Activated naive CD4-positive, alpha-beta T cell treated with anti-CD3 and anti-CD28 coated beads for 36 hours (primary cell): ENCODE measurements at regions of chr13 and their contacts with region 1.

Region 1: DNA sequence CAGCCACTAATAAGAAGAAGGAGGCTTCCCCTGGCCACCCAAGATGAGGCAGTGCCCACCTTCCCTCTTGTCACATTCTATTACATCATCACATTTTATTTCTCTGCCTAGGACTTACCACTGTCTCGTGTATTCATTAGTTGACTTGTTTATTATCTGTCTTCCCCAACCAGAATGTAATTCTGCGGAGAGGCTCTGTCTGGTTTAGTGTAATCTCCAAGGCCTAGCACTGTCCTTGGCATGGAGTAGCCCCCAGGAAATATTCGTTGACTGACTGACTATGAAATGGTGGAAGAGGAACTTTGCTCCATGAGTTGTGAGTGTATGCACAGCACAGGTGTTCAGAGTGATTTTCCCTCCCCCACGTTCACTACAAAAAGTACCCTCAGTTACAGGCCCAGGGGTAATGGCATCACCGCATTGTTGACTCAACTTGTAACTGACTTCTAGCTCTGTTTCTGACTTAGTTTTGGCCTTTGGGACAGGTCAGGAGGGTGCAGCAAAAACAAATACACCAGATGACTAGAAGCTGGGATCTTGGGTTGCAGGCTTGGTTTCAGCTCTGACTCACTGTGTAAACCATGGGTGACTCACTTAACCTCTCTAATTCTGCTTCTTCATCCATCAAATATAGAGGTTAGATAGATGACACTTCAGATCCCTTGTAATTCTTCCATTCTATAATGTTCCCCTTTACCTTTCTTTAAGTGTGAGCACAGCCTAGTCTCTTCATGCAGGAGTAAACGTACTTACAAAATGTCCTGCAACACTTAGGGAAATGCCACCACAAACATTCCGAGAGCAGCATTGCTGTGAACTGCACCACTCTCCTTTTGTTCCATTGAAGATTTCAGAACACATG is 229.7 kb downstream of the KCNRG start:
- DNase-seq: peak; percentile 84
- H3K4me3 Mint-ChIP-seq: no peak overlapping the region
- H3K27ac Mint-ChIP-seq: peak overlapping the region; percentile 72
- H3K4me1 Mint-ChIP-seq: peaks cover 30% of the 10 kb centered on the region
- H3K27me3 Mint-ChIP-seq: peaks cover 13% of the 10 kb centered on the region

Region 2: DNA sequence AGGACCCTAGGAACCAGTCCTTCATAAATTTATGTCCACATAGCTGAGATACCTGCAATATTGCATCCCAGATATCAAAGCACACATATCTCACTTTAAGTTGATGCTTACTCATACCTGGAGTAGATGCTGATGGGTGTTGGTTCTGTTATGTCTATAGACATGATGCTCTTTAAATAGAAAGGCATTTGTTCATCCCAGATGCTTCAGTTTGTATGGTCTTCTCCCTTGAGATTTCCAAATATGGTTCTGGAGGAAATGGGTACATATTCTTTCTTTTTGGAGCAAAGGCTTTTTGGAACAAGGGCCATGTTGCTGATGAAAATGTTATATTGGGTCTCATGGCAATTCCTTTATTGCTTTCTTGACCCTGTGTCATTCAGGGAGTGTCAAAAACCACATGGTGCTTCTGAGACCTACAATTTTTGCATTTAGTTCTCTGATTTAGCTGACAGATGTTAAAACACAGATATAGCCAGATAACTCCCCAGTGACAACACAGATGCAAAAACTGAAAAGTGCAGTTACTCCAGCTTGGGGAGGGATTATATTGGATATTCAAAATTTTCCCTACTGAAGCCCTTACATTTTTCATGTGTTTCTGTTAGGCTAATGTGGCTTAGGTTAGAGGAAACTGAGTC is 18.3 kb before region 1 on chr13:
- CTCF ChIA-PET with region 1: no interaction called
- intact Hi-C with region 1: loop called (anchors 1 kb)
- DNase-seq: no peak
- H3K4me3 Mint-ChIP-seq: no peak overlapping the region
- H3K27ac Mint-ChIP-seq: no peak overlapping the region
- H3K4me1 Mint-ChIP-seq: peaks cover 54% of the 10 kb centered on the region
- H3K27me3 Mint-ChIP-seq: peaks cover 15% of the 10 kb centered on the region

Region 3: DNA sequence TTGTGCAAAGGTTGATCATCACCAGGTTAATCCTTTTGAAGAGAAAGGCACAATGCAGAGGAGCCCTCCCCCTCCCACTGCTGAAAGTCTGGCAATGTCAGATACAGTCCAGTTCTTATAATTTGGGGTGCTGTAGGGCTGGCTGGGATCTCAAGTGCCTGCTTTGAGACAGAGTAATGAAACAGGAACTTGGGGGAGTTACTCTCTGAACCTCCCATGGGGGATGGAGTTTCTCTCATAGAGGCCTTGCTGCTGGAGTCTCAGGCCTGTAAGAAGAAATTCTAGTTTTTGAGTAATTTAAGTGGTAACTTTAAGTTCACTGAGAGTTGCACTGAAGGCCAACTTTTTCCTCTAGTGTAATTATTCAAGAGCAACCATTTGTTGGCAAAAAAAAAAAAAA is 180.8 kb after region 1 on chr13:
- CTCF ChIA-PET with region 1: no interaction called
- intact Hi-C with region 1: loop called (anchors 2 kb)
- DNase-seq: no peak
- H3K4me3 Mint-ChIP-seq: no peak overlapping the region
- H3K27ac Mint-ChIP-seq: no peak overlapping the region
- H3K4me1 Mint-ChIP-seq: peaks cover 23% of the 10 kb centered on the region
- H3K27me3 Mint-ChIP-seq: no peaks in the 10 kb centered on the region

Region 4: DNA sequence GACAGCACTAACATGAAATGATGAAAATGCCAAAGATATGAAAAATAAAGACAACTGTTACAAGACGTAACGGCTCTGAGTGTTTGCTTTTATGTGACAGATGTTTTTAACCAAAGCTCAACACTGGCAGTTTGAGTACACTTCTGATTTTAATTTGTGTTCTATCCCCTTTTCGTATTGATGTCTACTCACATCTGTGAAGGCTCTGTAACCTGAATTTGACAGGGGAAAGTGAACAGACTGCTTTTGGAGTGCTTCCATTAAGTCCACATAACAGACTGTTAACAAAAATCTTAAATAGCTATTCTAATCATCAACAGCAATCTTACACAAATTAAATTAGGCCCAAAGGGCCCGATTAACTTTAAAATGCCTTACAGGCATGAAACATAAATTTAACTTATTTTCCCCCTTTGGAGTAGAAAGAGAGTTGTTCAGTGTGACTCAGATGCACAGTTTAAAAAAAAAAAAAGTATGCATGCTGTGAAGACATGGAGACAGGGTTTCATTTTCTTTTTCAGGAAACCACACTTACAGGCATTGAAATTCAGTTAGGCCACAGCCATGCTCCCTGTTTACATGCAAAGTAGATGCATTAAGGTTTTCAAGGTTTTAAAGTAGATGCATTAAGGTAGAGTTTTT is 648.4 kb after region 1 on chr13:
- CTCF ChIA-PET with region 1: interaction called, 3 read pairs
- intact Hi-C with region 1: loop called (anchors 2 kb)
- DNase-seq: peak; percentile 41
- H3K4me3 Mint-ChIP-seq: peak overlapping the region; percentile 36
- H3K27ac Mint-ChIP-seq: peak overlapping the region; percentile 79
- H3K4me1 Mint-ChIP-seq: peaks cover 38% of the 10 kb centered on the region
- H3K27me3 Mint-ChIP-seq: no peaks in the 10 kb centered on the region